ENCODE measurements at regions of chr7 and their contacts with region 1.

Region 1: GRCh38 chr7:98400542-98401340 is at the start of gene BAIAP2L1:
- DNase-seq: peak; percentile 75
- ATAC-seq: peak; percentile 88
- total RNA-seq, gene BAIAP2L1: 1.6 TPM

Region 2: DNA sequence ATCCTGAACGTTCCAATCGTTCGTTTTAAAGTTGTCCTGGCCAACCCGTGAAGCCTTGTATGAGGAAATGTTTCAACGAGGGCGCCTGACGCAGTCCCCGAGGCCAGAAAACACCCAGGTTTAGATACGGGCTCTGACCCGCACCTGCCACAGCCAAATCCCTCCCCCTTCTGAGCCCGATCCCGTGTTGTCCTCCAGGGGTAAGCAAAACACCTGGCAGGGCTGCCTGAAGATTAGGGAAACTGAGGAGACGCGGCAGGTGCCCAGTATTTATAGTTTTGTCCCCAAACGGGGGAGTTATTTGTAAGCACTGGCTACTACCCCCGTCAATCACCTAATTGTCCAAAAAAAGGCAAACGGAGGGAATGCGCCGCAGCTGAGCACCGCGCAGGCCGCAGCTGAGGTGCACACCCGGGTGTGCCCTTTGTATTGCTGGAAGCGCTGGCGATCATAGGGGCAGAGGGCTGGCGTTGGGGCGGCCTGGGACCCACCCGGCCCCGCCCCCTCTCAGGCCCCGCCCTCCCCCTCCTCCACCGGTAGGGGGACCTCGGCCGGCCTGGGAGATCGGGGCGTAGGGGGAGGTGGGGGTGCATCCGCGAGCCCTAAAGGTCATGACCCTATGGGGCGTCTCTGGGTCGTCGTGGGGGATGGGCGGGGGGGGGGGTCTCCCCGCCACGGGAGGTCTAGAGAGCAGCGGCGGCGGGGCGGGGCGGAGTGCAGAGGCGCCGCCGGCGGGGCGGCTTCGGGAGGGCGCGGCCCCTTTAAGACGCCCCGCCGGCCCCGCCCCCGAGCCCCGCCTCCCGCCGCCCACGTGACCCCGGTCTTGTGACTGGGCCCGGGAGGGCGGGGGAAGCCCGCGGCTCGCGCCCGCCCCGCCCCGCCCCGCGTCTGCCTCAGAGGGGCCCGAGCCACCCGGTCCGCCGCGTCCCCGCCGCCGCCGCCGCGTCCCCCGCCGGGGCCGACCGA is 119.7 kb before region 1 on chr7 and contains the start of gene BRI3:
- intact Hi-C with region 1: loop called (anchors 5 kb)
- DNase-seq: peak; percentile 97
- ATAC-seq: peak; percentile 84
- total RNA-seq, gene BRI3: 240 TPM

Region 3: DNA sequence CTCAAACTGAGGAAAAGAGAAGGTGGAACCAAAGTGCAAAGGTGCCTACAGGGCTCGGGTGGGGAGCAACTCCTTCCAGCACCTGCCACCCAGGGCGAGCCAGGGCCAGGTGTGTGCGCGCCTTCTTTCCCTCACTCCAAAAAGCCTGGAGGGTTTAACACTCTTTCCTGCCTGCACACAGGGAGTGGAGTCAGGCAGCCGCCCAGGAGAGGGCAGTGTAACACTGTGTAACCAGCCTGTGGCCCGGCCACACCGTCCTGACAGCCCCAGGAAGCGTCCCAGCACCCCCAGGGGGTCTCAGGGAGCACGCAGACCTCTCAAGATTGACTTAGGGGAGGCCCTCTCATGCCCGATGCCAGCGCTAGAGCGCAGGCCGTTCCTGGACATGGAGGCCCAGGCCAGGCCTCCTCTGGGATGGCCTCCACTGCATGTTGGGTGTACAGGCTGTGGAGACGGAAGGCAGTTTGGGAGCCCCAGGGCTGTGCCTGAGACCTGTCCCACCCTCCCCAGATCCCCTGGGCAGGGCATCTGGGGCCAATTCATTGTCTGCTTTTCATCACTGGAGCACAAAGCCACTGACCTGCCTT is 105.9 kb before region 1 on chr7:
- intact Hi-C with region 1: loop called (anchors 1 kb)
- DNase-seq: no peak
- ATAC-seq: peak; percentile 54

Region 4: DNA sequence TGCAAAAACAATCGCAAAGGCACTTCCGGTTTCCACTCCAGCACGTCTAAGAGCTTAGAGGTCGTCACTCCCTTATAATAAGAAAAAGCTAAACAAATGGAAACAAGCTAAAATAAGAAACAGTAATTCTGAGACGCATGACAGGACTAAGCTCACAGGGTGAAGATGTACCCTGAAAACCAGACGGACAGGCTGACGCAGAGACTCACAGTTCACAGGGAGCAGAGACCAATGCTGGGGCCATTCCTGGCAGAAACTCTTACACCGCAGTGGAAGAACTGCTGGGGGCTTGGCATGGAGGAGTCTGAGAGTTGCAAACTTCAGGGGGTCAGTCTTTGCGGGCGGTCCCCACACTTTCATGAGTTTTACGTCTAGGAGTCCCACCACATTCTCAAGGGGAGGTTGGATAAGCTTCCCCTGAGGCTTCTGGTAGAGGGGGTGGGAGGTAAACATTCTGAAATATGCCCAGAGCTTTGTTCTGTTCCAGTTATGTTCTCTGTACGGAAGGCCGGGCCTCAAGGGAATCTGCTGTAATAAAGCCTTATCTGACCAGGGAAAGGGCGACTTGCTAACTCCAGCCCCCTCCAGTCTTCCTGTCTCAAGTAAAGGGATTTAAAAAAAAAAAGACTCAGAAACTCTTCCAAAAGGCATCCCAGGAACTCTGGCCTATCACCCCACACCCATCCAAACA is 71.5 kb before region 1 on chr7:
- intact Hi-C with region 1: loop called (anchors 2 kb)
- DNase-seq: no peak
- ATAC-seq: peak; percentile 70

Region 5: DNA sequence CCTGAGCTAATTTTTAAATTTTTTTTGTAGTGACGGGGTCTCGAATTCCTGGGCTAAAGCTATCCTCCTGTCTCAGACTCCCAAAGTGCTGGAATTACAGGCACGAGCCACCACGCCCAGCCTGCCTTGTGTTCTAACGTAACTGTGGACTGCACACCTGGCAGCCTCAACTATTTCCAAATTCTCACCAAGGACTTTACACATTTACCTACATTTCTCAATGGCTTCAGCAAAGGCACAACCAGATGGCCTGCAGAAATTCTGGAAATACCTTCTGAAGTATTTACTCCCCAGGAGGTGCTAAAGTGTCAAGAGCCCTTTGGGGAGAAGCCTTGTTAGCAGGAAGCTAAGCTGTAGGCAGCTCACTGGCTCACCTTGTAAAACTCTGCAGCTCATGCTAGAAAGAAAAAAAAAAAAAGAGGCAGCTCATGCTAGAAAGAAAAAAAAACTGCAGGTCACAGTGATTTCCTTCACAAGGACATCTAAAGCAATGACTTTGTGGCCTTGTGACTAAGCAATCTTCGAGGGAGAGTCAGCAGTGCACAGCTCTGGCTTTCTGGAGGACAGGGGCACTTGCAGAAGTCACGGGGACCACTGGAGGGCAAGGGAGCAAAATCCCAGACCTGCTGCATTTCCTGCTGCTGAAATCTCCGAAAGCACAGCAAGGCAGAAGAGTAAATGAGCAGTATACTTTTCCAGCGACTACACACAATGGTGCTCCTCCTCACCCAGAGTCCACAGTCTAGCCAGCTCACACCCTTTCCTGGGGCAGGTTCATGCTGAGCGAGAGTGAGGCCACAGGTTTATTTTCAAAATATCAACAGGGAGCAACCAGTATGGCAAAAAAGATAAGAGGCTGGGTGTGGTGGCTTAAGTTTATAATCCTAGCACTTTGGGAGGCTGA is 40.3 kb before region 1 on chr7:
- intact Hi-C with region 1: loop called (anchors 5 kb)
- DNase-seq: no peak
- ATAC-seq: no peak

Region 6: GRCh38 chr7:99061001-99061776 is 660.4 kb after region 1 on chr7:
- intact Hi-C with region 1: no loop called
- DNase-seq: no peak
- ATAC-seq: no peak

Measured in Right ventricle myocardium inferior (tissue), 1 donor.